ENCODE measurements at regions of chr17 and their contacts with region 1.

Region 1: DNA sequence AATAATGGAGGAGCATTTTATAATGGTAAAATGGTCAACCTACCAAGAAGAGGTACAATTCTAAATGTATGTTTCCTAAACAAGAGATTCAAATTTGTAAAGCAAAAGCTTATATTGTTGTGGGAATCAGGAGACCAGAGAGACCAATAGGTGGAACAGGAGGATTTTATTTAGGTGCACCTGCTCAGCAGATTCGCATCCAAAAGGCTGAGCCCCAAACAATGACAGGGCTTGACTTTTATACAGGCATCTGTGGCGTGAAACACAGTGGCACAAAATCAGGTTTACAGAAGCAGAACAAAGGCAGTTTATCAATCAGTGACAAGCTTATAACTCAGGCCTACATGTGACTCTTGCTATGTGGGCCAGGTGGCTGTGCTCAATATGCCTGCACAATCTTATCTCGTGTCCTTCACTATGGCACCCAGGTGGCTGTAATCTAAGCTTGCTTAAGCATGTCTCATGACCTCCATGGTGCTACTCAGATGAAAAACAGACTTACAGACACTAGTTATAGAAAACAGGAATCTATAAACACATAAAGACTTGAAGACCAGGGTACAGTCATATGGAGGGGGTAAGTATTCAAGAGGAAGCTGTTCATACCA is 780.2 kb upstream of the CA10 start:
- DNase-seq: no peak
- H3K4me3 ChIP-seq: no peak overlapping the region
- H3K27ac ChIP-seq: no peak overlapping the region
- H3K4me1 ChIP-seq: no peaks in the 10 kb centered on the region
- H3K27me3 ChIP-seq: no peaks in the 10 kb centered on the region
- CTCF ChIP-seq: no peak

Region 2: GRCh38 chr17:52827526-52827925 is 111.2 kb before region 1 on chr17:
- CTCF ChIA-PET with region 1: no interaction called
- dilution Hi-C with region 1: no loop called
- in situ Hi-C with region 1: loop called in 1 of 2 experiments (anchors 25 kb)
- intact Hi-C with region 1: no loop called
- DNase-seq: no peak
- H3K4me3 ChIP-seq: no peak overlapping the region
- H3K27ac ChIP-seq: no peak overlapping the region
- H3K4me1 ChIP-seq: no peaks in the 10 kb centered on the region
- H3K27me3 ChIP-seq: no peaks in the 10 kb centered on the region
- CTCF ChIP-seq: no peak

Measured in mammary epithelial cell (primary cell).